K562 (cell line): ENCODE measurements at regions of chr2 and their contacts with region 1.

Region 1: GRCh38 chr2:27016801-27017325 is 15.9 kb upstream of the TMEM214 start:
- DNase-seq: peak; percentile 69 to 90 (median 72)
- ATAC-seq: peak; percentile 70
- H3K4me3 ChIP-seq: no peak overlapping the region
- H3K27ac ChIP-seq: peak overlapping the region; percentile 91
- H3K4me1 ChIP-seq: peaks cover 62 to 87% of the 10 kb centered on the region in 2 experiments
- H3K27me3 ChIP-seq: no peaks in the 10 kb centered on the region
- CTCF ChIP-seq: peak; percentile 79 to 87 (median 85)
- EP300 ChIP-seq: 0 out of 2 replicates have a peak, but pooled peaks have one; percentile 20
- POLR2A ChIP-seq: no peak
- RAD21 ChIP-seq: peak; percentile 93 to 94

Region 2: GRCh38 chr2:26764078-26764887 is 252.6 kb before region 1 on chr2 and contains the start of gene SLC35F6:
- CTCF ChIA-PET with region 1: no interaction called
- POLR2A ChIA-PET with region 1: no interaction called
- in situ Hi-C with region 1: no loop called
- intact Hi-C with region 1: loop called (anchors 10 kb)
- DNase-seq: peak; percentile 88 to 95 (median 93)
- ATAC-seq: peak; percentile 87
- H3K4me3 ChIP-seq: peak within 1 kb of the TSS; percentile 95
- H3K27ac ChIP-seq: peak within 1 kb of the TSS; percentile 84
- H3K4me1 ChIP-seq: peaks cover 42% of the 10 kb centered on the region in 2 experiments
- H3K27me3 ChIP-seq: no peaks in the 10 kb centered on the region
- CTCF ChIP-seq: no peak
- EP300 ChIP-seq: no peak
- POLR2A ChIP-seq: peak; percentile 86
- RAD21 ChIP-seq: no peak
- polyA plus RNA-seq, gene SLC35F6: 19.3 to 47.3 TPM

Region 3: GRCh38 chr2:26959331-26959730 is 57.5 kb before region 1 on chr2:
- CTCF ChIA-PET with region 1: interaction called, 65 read pairs
- POLR2A ChIA-PET with region 1: interaction called, 13 read pairs
- in situ Hi-C with region 1: loop called (anchors 5 kb)
- intact Hi-C with region 1: loop called (anchors 1 kb)
- DNase-seq: no peak
- ATAC-seq: no peak
- H3K4me3 ChIP-seq: no peak overlapping the region
- H3K27ac ChIP-seq: no peak overlapping the region
- H3K4me1 ChIP-seq: peaks cover 5 to 6% of the 10 kb centered on the region in 2 experiments; a peak in 3 of 5 replicates
- H3K27me3 ChIP-seq: peaks cover 25 to 28% of the 10 kb centered on the region in 2 experiments; a peak in 4 of 5 replicates
- CTCF ChIP-seq: no peak
- EP300 ChIP-seq: no peak
- POLR2A ChIP-seq: no peak
- RAD21 ChIP-seq: no peak

Region 4: GRCh38 chr2:26970244-26970920 is 46.5 kb before region 1 on chr2 and contains the start of gene MAPRE3:
- CTCF ChIA-PET with region 1: no interaction called
- POLR2A ChIA-PET with region 1: interaction called, 5 read pairs
- in situ Hi-C with region 1: no loop called
- intact Hi-C with region 1: loop called (anchors 2 kb)
- DNase-seq: peak; percentile 86 to 97 (median 94)
- ATAC-seq: peak; percentile 85
- H3K4me3 ChIP-seq: peak within 1 kb of the TSS; percentile 72
- H3K27ac ChIP-seq: peak within 1 kb of the TSS; percentile 82
- H3K4me1 ChIP-seq: peaks cover 26 to 34% of the 10 kb centered on the region in 2 experiments; a peak in 4 of 5 replicates
- H3K27me3 ChIP-seq: peaks cover 5% of the 10 kb centered on the region in 2 experiments; a peak in 1 of 5 replicates
- CTCF ChIP-seq: no peak
- EP300 ChIP-seq: no peak
- POLR2A ChIP-seq: no peak
- RAD21 ChIP-seq: no peak
- polyA plus RNA-seq, gene MAPRE3: 0.70 to 1.1 TPM

Region 5: DNA sequence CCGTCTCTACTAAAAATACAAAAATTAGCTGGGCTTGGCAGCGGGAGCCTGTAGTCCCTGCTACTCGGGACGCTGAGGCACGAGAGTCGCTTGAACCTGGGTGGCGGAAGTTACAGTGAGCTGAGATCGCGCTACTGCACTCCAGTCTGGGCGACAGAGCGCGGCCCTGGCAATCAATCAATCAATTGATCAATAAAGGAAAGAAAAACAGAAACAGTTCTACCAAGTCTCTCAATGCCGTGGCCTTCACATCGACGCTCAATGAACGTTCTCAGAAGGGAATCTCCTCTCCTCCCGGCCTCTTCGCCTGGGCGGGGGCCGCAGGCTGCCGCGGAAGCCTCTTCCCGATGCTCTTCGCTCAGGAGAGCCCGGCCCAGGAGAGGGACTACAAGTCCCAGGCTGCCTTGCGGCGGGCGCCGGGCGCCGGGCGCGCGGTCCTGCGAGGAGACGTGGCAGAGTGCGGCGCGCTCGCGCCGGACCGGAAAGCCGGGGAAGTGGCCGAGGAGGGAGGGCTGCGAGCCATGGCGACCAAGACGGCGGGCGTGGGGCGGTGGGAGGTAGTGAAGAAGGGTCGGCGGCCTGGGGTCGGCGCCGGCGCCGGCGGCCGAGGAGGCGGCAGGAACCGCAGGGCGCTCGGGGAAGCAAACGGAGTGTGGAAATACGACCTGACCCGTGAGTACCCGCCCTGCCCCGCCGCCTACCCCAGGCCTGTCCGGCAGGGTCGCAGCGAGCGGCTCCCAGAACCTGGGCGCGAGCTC is 15.8 kb after region 1 on chr2 and contains the start of gene TMEM214:
- CTCF ChIA-PET with region 1: no interaction called
- POLR2A ChIA-PET with region 1: interaction called, 18 read pairs
- in situ Hi-C with region 1: no loop called
- intact Hi-C with region 1: loop called (anchors 1 kb)
- DNase-seq: peak; percentile 90 to 93 (median 92)
- ATAC-seq: peak; percentile 96
- H3K4me3 ChIP-seq: peak within 1 kb of the TSS; percentile 97
- H3K27ac ChIP-seq: peak within 1 kb of the TSS; percentile 89
- H3K4me1 ChIP-seq: peaks cover 14 to 19% of the 10 kb centered on the region in 2 experiments
- H3K27me3 ChIP-seq: no peaks in the 10 kb centered on the region
- CTCF ChIP-seq: peak in 1 of 3 experiments; percentile 21; a peak in 1 of 6 replicates
- EP300 ChIP-seq: 0 out of 2 replicates have a peak, but pooled peaks have one; percentile 2
- POLR2A ChIP-seq: peak; percentile 84
- RAD21 ChIP-seq: 0 out of 4 replicates have a peak, but pooled peaks of 1 of the 2 experiments have one; percentile 2
- polyA plus RNA-seq, gene TMEM214: 11.4 to 14.8 TPM

Region 6: GRCh38 chr2:27086090-27086723 is 69.3 kb after region 1 on chr2:
- CTCF ChIA-PET with region 1: interaction called, 3 read pairs
- POLR2A ChIA-PET with region 1: no interaction called
- in situ Hi-C with region 1: no loop called
- intact Hi-C with region 1: loop called (anchors 1 kb)
- DNase-seq: peak; percentile 96 to 97 (median 96)
- ATAC-seq: peak; percentile 90
- H3K4me3 ChIP-seq: peak overlapping the region; percentile 57
- H3K27ac ChIP-seq: peak overlapping the region; percentile 85
- H3K4me1 ChIP-seq: peaks cover 49 to 66% of the 10 kb centered on the region in 2 experiments
- H3K27me3 ChIP-seq: no peaks in the 10 kb centered on the region
- CTCF ChIP-seq: peak; percentile 62 to 89 (median 88)
- EP300 ChIP-seq: 0 out of 2 replicates have a peak, but pooled peaks have one; percentile 22
- POLR2A ChIP-seq: peak; percentile 70
- RAD21 ChIP-seq: peak; percentile 55